ENCODE measurements at regions of chr15 and their contacts with region 1.

Region 1: GRCh38 chr15:58987489-58988005 is at the start of gene RNF111:
- DNase-seq: peak; percentile 90 to 96 (median 93)
- H3K4me3 ChIP-seq: peak within 1 kb of the TSS; percentile 77 to 99 (median 86)
- H3K4me3 Mint-ChIP-seq: peak within 1 kb of the TSS; percentile 99
- H3K27ac ChIP-seq: peak within 1 kb of the TSS; percentile 87 to 100
- H3K27ac Mint-ChIP-seq: peak within 1 kb of the TSS; percentile 95 to 99 (median 97)
- H3K4me1 ChIP-seq: peaks cover 43 to 66% of the 10 kb centered on the region in 2 donors
- H3K4me1 Mint-ChIP-seq: peaks cover 62% of the 10 kb centered on the region
- H3K27me3 ChIP-seq: no peaks in the 10 kb centered on the region
- H3K27me3 Mint-ChIP-seq: no peaks in the 10 kb centered on the region
- CTCF ChIP-seq: no peak
- polyA plus RNA-seq, gene RNF111: 10.2 to 28.0 (median 18.2) TPM

Region 2: GRCh38 chr15:58677426-58677825 is 310.1 kb before region 1 on chr15:
- intact Hi-C with region 1: no loop called
- DNase-seq: no peak
- H3K4me3 ChIP-seq: no peak overlapping the region
- H3K4me3 Mint-ChIP-seq: no peak overlapping the region
- H3K27ac ChIP-seq: no peak overlapping the region
- H3K27ac Mint-ChIP-seq: peak overlapping the region in 1 of 7 donors; percentile 17
- H3K4me1 ChIP-seq: no peaks in the 10 kb centered on the region
- H3K4me1 Mint-ChIP-seq: peaks cover 9% of the 10 kb centered on the region
- H3K27me3 ChIP-seq: no peaks in the 10 kb centered on the region
- H3K27me3 Mint-ChIP-seq: no peaks in the 10 kb centered on the region
- CTCF ChIP-seq: no peak

Region 3: GRCh38 chr15:58933281-58934113 is 54.0 kb before region 1 on chr15 and contains the start of gene SLTM:
- intact Hi-C with region 1: loop called (anchors 5 kb)
- DNase-seq: peak; percentile 92 to 93 (median 92)
- H3K4me3 ChIP-seq: peak within 1 kb of the TSS; percentile 74 to 95 (median 90)
- H3K4me3 Mint-ChIP-seq: peak within 1 kb of the TSS; percentile 96 to 99
- H3K27ac ChIP-seq: peak within 1 kb of the TSS; percentile 93 to 99
- H3K27ac Mint-ChIP-seq: peak within 1 kb of the TSS; percentile 99 to 100 (median 100)
- H3K4me1 ChIP-seq: peaks cover 22 to 30% of the 10 kb centered on the region in 2 donors
- H3K4me1 Mint-ChIP-seq: peaks cover 20% of the 10 kb centered on the region
- H3K27me3 ChIP-seq: no peaks in the 10 kb centered on the region
- H3K27me3 Mint-ChIP-seq: no peaks in the 10 kb centered on the region
- CTCF ChIP-seq: peak; percentile 25
- polyA plus RNA-seq, gene SLTM: 26.5 to 105 (median 34.3) TPM

Region 4: GRCh38 chr15:59039225-59039624 is 51.7 kb after region 1 on chr15:
- intact Hi-C with region 1: loop called in 1 of 2 experiments (anchors 10 kb)
- DNase-seq: no peak
- H3K4me3 ChIP-seq: no peak overlapping the region
- H3K4me3 Mint-ChIP-seq: no peak overlapping the region
- H3K27ac ChIP-seq: no peak overlapping the region
- H3K27ac Mint-ChIP-seq: peak overlapping the region in 2 of 7 donors; percentile 16 to 57
- H3K4me1 ChIP-seq: no peaks in the 10 kb centered on the region
- H3K4me1 Mint-ChIP-seq: peaks cover 26% of the 10 kb centered on the region
- H3K27me3 ChIP-seq: no peaks in the 10 kb centered on the region
- H3K27me3 Mint-ChIP-seq: no peaks in the 10 kb centered on the region
- CTCF ChIP-seq: no peak

Region 5: GRCh38 chr15:59104912-59105732 is 117.6 kb after region 1 on chr15 and contains the start of gene CCNB2:
- intact Hi-C with region 1: loop called (anchors 10 kb)
- DNase-seq: peak; percentile 90 to 94 (median 93)
- H3K4me3 ChIP-seq: peak within 1 kb of the TSS; percentile 70 to 92 (median 89)
- H3K4me3 Mint-ChIP-seq: peak within 1 kb of the TSS; percentile 82 to 95
- H3K27ac ChIP-seq: peak within 1 kb of the TSS; percentile 71 to 94
- H3K27ac Mint-ChIP-seq: peak within 1 kb of the TSS; percentile 96 to 100 (median 99)
- H3K4me1 ChIP-seq: peaks cover 14 to 23% of the 10 kb centered on the region in 2 donors
- H3K4me1 Mint-ChIP-seq: peaks cover 20% of the 10 kb centered on the region
- H3K27me3 ChIP-seq: no peaks in the 10 kb centered on the region
- H3K27me3 Mint-ChIP-seq: no peaks in the 10 kb centered on the region
- CTCF ChIP-seq: no peak
- polyA plus RNA-seq, gene CCNB2: 0.13 to 0.53 (median 0.31) TPM

Region 6: DNA sequence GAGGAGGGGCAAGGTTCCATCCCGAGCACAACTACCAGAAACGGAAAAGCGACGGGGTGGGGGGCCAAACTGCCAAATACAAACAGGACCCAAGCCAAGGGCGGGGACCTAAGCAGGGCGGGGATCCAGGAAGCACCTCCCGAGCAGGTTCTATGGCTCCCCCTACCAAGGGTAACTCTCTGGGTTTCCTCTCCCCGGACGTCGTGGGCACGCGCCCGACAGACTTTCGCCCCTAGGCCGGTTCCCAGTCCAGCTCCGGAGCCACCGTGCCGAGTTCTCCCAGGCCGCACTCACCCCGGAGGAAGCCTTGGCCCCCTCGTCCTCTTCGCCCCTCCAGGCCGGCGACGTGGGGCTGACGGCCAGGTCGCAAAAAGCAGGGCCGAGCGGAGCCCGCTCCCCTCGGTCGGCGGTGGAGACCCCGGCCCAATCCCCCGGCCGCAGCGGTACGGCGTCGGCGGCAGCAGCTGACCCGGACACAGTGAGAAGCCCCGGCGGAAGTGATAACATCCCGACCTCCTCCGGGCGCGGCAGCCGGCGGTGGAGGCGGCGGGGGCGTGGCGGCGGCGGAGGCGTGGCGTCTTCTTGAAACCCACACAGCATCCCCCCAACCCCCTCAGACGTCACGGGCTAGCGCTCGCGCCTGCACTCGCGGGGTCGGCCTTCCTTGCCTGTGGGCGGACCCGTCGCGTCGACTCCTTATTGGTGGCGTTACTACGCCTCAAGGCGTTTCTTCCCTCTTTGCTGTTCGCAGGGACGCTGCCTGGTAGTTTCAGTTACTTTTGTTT is 701.5 kb after region 1 on chr15 and contains the start of gene BNIP2:
- intact Hi-C with region 1: loop called in 1 of 2 experiments (anchors 10 kb)
- DNase-seq: peak; percentile 97 to 99 (median 99)
- H3K4me3 ChIP-seq: peak within 1 kb of the TSS; percentile 69 to 98 (median 79)
- H3K4me3 Mint-ChIP-seq: peak within 1 kb of the TSS; percentile 94 to 95
- H3K27ac ChIP-seq: peak within 1 kb of the TSS; percentile 94 to 99
- H3K27ac Mint-ChIP-seq: peak within 1 kb of the TSS; percentile 99 to 100 (median 99)
- H3K4me1 ChIP-seq: peaks cover 42 to 53% of the 10 kb centered on the region in 2 donors
- H3K4me1 Mint-ChIP-seq: peaks cover 42% of the 10 kb centered on the region
- H3K27me3 ChIP-seq: no peaks in the 10 kb centered on the region
- H3K27me3 Mint-ChIP-seq: peaks cover 0 to 7% (median 0%) of the 10 kb centered on the region in 3 donors
- CTCF ChIP-seq: no peak
- polyA plus RNA-seq, gene BNIP2: 83.4 to 189 (median 136) TPM

Region 7: GRCh38 chr15:59725172-59725486 is 737.6 kb after region 1 on chr15:
- intact Hi-C with region 1: no loop called
- DNase-seq: no peak
- H3K4me3 ChIP-seq: no peak overlapping the region
- H3K4me3 Mint-ChIP-seq: no peak overlapping the region
- H3K27ac ChIP-seq: no peak overlapping the region
- H3K27ac Mint-ChIP-seq: no peak overlapping the region
- H3K4me1 ChIP-seq: no peaks in the 10 kb centered on the region
- H3K4me1 Mint-ChIP-seq: no peaks in the 10 kb centered on the region
- H3K27me3 ChIP-seq: peaks cover 0 to 3% of the 10 kb centered on the region in 2 donors
- H3K27me3 Mint-ChIP-seq: peaks cover 2 to 3% (median 2%) of the 10 kb centered on the region in 3 donors
- CTCF ChIP-seq: peak; percentile 24

Measured in CD14-positive monocyte (primary cell).